RWPE1 (cell line): ENCODE measurements at regions of chr12 and their contacts with region 1.

Region 1: GRCh38 chr12:124352839-124353238 is 57.9 kb downstream of the RFLNA start:
- DNase-seq: no peak
- H3K27ac ChIP-seq: peak overlapping the region; percentile 66
- CTCF ChIP-seq: no peak

Region 2: DNA sequence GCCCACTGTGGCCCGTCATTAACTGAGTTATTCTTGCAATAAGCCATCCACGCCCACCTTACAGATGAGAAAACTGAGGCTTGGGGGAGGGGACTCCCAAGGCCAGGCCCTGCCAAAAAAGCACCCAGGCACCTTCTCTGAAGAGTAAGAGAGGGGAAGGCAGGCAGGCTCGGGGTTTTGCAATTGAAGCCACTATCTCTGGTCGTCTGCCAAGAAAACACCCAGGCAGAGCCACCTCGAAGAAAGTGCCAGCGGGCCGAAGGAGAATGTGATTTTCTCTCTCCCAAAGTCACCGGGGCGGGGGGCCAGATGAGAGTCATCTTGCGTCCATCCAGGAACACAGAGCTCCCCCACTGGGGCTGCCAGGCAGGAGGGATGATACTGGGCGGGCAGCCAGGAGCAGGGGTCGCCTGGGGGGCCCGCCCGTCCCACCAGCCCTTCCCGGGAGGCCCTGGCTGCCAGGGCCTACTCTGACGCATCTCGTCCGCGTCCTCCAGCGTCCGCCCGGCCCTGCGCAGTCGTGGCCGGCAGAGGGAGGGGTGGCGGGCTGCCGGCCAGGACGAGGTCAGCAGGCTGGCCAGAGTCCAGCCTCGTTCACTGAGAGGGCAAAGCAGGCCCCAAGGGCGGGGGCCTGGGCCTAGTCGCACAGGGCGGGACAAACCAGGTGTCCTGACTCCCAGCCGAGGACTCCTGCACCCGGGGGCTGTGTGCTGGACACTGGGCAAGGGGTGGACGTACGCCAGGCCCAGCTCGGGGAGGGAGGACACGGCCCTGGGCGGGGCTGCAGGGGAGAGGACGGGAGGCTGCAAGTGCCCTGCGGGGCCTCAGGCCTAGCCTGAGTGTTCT is 16.4 kb after region 1 on chr12:
- CTCF ChIA-PET with region 1: interaction called, 12 read pairs
- POLR2A ChIA-PET with region 1: no interaction called
- DNase-seq: no peak
- H3K27ac ChIP-seq: peak overlapping the region; percentile 93
- CTCF ChIP-seq: no peak